Ascending aorta (tissue), 2 donors: ENCODE measurements at regions of chr1 and their contacts with region 1.

Region 1: GRCh38 chr1:153990468-153991150 is at the start of gene RPS27:
- DNase-seq: peak; percentile 83 to 97
- H3K4me3 ChIP-seq: peak within 1 kb of the TSS; percentile 64 to 73
- H3K27ac ChIP-seq: peak within 1 kb of the TSS; percentile 86 to 88
- H3K4me1 ChIP-seq: peaks cover 7 to 28% of the 10 kb centered on the region in 2 donors
- H3K27me3 ChIP-seq: no peaks in the 10 kb centered on the region
- CTCF ChIP-seq: peak in 1 of 3 experiments; percentile 13
- total RNA-seq, gene RPS27: 707 TPM

Region 2: GRCh38 chr1:153677718-153678505 is 312.7 kb before region 1 on chr1:
- intact Hi-C with region 1: loop called (anchors 5 kb)
- DNase-seq: peak in 1 of 2 donors; percentile 83
- H3K4me3 ChIP-seq: peak overlapping the region; percentile 81 to 92
- H3K27ac ChIP-seq: peak overlapping the region; percentile 88 to 96
- H3K4me1 ChIP-seq: peaks cover 0 to 7% of the 10 kb centered on the region in 2 donors
- H3K27me3 ChIP-seq: no peaks in the 10 kb centered on the region
- CTCF ChIP-seq: peak; percentile 90 to 94 (median 91)

Region 3: GRCh38 chr1:153742411-153743142 is 248.0 kb before region 1 on chr1:
- intact Hi-C with region 1: no loop called
- DNase-seq: no peak
- H3K4me3 ChIP-seq: no peak overlapping the region
- H3K27ac ChIP-seq: peak overlapping the region; percentile 74 to 86
- H3K4me1 ChIP-seq: peaks cover 6 to 35% of the 10 kb centered on the region in 2 donors
- H3K27me3 ChIP-seq: no peaks in the 10 kb centered on the region
- CTCF ChIP-seq: no peak

Region 4: GRCh38 chr1:153816283-153816889 is 174.2 kb before region 1 on chr1:
- intact Hi-C with region 1: loop called (anchors 2 kb)
- DNase-seq: no peak
- H3K4me3 ChIP-seq: no peak overlapping the region
- H3K27ac ChIP-seq: peak overlapping the region; percentile 11 to 16
- H3K4me1 ChIP-seq: no peaks in the 10 kb centered on the region
- H3K27me3 ChIP-seq: no peaks in the 10 kb centered on the region
- CTCF ChIP-seq: no peak

Region 5: GRCh38 chr1:153827168-153827964 is 163.2 kb before region 1 on chr1:
- intact Hi-C with region 1: no loop called
- DNase-seq: no peak
- H3K4me3 ChIP-seq: no peak overlapping the region
- H3K27ac ChIP-seq: no peak overlapping the region
- H3K4me1 ChIP-seq: no peaks in the 10 kb centered on the region
- H3K27me3 ChIP-seq: no peaks in the 10 kb centered on the region
- CTCF ChIP-seq: no peak

Region 6: DNA sequence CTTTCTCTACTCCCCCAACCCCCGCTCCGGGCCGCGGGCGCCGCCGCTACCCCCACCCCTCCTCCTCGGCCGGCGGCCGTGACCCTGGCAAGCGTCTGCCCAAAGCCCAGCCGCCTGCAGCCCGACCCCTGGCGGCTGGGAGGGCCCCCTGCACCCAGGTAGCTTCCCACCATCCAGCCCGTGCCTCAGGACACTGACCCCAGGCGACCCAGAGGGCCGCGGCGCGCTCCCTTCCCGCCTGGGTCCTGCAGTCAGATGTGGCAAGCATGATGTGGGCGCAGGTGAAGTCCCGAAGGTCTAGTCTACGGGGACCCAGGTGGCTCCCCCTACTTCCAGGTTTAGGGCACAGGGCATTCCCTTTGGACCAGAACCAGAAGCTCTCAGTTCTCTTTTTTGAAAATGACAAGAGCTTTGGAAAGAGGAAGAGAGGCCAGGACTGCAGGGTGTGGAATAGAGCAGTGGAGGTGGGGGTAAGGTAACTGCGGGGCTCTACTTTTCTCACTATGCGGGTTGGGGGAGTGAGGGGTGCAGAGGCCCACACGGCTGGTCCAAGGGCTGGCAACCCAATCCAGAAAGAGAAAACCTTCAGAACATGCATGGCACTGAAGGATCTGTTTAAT is 43.9 kb before region 1 on chr1 and contains the start of gene DENND4B:
- intact Hi-C with region 1: loop called (anchors 1 kb)
- DNase-seq: peak; percentile 21 to 91
- H3K4me3 ChIP-seq: peak within 1 kb of the TSS; percentile 93 to 99
- H3K27ac ChIP-seq: peak within 1 kb of the TSS; percentile 89 to 98
- H3K4me1 ChIP-seq: peaks cover 4 to 9% of the 10 kb centered on the region in 2 donors
- H3K27me3 ChIP-seq: no peaks in the 10 kb centered on the region
- CTCF ChIP-seq: peak; percentile 93 to 99 (median 97)
- total RNA-seq, gene DENND4B: 80.0 TPM

Region 7: DNA sequence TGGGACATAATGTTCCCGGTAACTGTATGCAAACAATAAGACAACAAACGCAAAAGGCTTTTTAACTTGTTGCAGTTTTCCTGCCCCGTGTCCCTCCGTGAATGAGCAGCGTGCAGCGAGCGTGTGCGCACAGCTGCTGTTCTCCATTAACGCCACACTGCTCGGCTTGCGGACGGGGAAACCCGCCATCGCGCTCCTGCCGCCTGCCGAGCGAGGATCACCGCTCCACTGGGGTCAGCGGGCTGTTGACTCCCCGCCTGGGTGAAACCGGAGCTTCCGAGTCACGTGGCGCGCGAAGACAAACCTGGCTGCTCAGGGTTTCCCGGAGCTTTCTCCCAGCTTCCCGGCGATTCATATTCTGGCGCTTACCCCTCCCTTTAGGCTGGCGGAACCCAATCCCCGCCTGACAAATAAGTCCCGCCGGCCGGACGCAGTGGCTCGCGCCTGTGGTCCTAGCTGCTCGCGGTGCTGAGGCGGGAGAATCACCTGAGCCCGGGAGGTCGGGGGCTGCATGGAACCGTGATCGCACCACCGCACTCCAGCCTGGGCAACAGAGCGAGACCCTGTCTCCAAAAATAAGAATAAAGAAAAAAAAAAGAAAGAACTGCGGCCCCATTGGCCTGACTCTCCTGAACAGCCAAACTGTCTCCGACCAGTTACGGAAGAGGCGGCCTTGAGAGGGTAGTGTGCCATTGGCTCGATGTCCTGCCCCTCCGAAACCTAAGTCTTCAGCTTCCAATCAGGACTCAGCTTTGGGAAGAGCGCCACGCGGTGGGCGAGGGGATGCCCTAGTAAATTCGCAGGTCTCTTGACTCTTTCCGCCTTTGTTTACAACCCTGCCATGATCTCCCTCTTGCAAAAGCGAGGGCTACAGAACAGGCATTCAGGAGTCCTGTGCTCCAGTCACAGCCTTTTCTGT is 23.3 kb before region 1 on chr1 and contains the start of gene CREB3L4:
- intact Hi-C with region 1: loop called (anchors 1 kb)
- DNase-seq: peak; percentile 73 to 96
- H3K4me3 ChIP-seq: peak within 1 kb of the TSS; percentile 62 to 69
- H3K27ac ChIP-seq: peak within 1 kb of the TSS; percentile 80 to 85
- H3K4me1 ChIP-seq: peaks cover 9 to 20% of the 10 kb centered on the region in 2 donors
- H3K27me3 ChIP-seq: no peaks in the 10 kb centered on the region
- CTCF ChIP-seq: peak; percentile 6 to 43 (median 43)
- total RNA-seq, gene CREB3L4: 6.3 TPM

Region 8: GRCh38 chr1:154014154-154014910 is 23.7 kb after region 1 on chr1:
- intact Hi-C with region 1: no loop called
- DNase-seq: no peak
- H3K4me3 ChIP-seq: no peak overlapping the region
- H3K27ac ChIP-seq: no peak overlapping the region
- H3K4me1 ChIP-seq: no peaks in the 10 kb centered on the region
- H3K27me3 ChIP-seq: no peaks in the 10 kb centered on the region
- CTCF ChIP-seq: no peak

Region 9: GRCh38 chr1:154220071-154220969 is 229.7 kb after region 1 on chr1 and contains the start of gene UBAP2L:
- intact Hi-C with region 1: loop called (anchors 1 kb)
- DNase-seq: peak; percentile 96 to 100
- H3K4me3 ChIP-seq: peak within 1 kb of the TSS; percentile 78 to 98
- H3K27ac ChIP-seq: peak within 1 kb of the TSS; percentile 96 to 98
- H3K4me1 ChIP-seq: peaks cover 20 to 25% of the 10 kb centered on the region in 2 donors
- H3K27me3 ChIP-seq: no peaks in the 10 kb centered on the region
- CTCF ChIP-seq: no peak
- total RNA-seq, gene UBAP2L: 67.8 TPM

Region 10: GRCh38 chr1:154614901-154615300 is 624.3 kb after region 1 on chr1:
- intact Hi-C with region 1: no loop called
- DNase-seq: no peak
- H3K4me3 ChIP-seq: no peak overlapping the region
- H3K27ac ChIP-seq: no peak overlapping the region
- H3K4me1 ChIP-seq: no peaks in the 10 kb centered on the region
- H3K27me3 ChIP-seq: no peaks in the 10 kb centered on the region
- CTCF ChIP-seq: no peak

Region 11: GRCh38 chr1:155135415-155136028 is 1144.9 kb after region 1 on chr1 and contains the start of gene SLC50A1:
- intact Hi-C with region 1: loop called (anchors 5 kb)
- DNase-seq: peak; percentile 78 to 98
- H3K4me3 ChIP-seq: peak within 1 kb of the TSS; percentile 76 to 80
- H3K27ac ChIP-seq: peak within 1 kb of the TSS; percentile 97 to 100
- H3K4me1 ChIP-seq: peaks cover 9 to 25% of the 10 kb centered on the region in 2 donors
- H3K27me3 ChIP-seq: no peaks in the 10 kb centered on the region
- CTCF ChIP-seq: peak; percentile 26 to 72 (median 39)
- total RNA-seq, gene SLC50A1: 9.4 TPM